H1 (cell line): ENCODE measurements at regions of chr20 and their contacts with region 1.

Region 1: GRCh38 chr20:45890985-45891983 is at the starts of genes CTSA and NEURL2:
- DNase-seq: peak; percentile 79 to 96
- H3K4me3 ChIP-seq: peak within 1 kb of the TSS; percentile 55 to 79 (median 74)
- H3K27ac ChIP-seq: peak within 1 kb of the TSS; percentile 38
- H3K4me1 ChIP-seq: peaks cover 0 to 10% (median 6%) of the 10 kb centered on the region in 4 experiments; a peak in 6 of 7 replicates
- H3K27me3 ChIP-seq: no peaks in the 10 kb centered on the region
- CTCF ChIP-seq: no peak
- EP300 ChIP-seq: peak in 1 of 2 experiments; percentile 91; a peak in 2 of 3 replicates
- POLR2A ChIP-seq: peak; percentile 43 to 69
- RAD21 ChIP-seq: peak in 1 of 2 experiments; percentile 1; a peak in 1 of 4 replicates
- total RNA-seq, gene CTSA: 49.7 and 52.5 TPM in 2 replicates
- total RNA-seq, gene NEURL2: 5.2 and 6.9 TPM in 2 replicates

Region 2: DNA sequence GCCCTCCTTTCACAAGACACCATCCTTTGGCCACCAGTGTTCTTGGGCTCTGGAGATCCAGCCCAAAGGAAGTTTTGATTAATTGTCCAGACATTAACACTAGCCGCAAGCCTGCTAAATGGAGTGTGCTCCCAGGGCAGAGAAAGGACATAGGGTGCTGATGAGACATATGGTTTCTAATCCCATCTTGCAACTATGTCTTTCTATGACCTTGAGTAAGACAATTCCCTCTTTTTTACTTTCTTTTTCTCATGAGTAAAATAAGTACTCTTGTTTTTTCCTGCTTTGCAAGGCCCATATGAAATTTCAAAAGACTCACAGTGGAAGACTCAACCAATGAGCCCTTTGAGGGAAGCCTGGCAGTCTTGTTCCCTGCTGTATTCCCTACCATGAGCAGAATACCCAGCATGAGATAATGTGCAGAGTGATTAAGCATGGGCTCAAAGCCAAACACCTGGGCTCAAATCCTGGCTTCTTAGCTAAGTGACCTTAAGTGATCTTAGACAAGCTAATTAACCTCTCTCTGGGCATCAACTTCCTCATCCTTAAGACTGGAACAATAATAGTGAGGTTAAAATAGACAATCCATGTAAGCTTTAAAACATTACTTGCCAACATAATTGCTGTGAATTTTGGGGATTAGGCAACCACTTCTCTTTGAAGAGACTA is 186.2 kb before region 1 on chr20 and contains the start of gene WFDC10B:
- CTCF ChIA-PET with region 1: no interaction called
- POLR2A ChIA-PET with region 1: no interaction called
- DNase-seq: no peak
- H3K4me3 ChIP-seq: no peak within 1 kb of the TSS
- H3K27ac ChIP-seq: no peak within 1 kb of the TSS
- H3K4me1 ChIP-seq: no peaks in the 10 kb centered on the region
- H3K27me3 ChIP-seq: no peaks in the 10 kb centered on the region; a peak in 1 of 7 replicates
- CTCF ChIP-seq: no peak
- EP300 ChIP-seq: no peak
- POLR2A ChIP-seq: no peak
- RAD21 ChIP-seq: no peak
- total RNA-seq, gene WFDC10B: 0.54 TPM in 1 of 2 replicates, not detected in the other

Region 3: DNA sequence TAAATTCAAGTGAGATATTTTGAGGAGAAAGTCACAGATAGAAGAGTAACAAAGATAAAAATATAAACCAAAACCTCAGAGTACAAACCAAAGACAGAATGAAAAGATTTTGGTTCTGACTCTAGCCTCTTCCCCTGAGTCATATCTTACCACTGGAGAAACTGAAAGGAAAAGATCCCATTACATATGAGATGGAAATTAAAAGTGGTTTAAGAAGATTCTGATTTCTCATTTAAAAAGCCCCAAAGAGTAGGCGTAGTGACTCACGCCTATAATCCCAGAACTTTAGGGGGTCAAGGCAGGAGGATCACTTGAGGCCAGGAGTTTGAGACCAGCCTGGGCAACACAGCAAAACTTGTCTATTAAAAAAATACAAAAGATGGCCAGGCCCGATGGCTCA is 138.5 kb before region 1 on chr20:
- CTCF ChIA-PET with region 1: no interaction called
- POLR2A ChIA-PET with region 1: no interaction called
- DNase-seq: no peak
- H3K4me3 ChIP-seq: no peak overlapping the region
- H3K27ac ChIP-seq: no peak overlapping the region
- H3K4me1 ChIP-seq: no peaks in the 10 kb centered on the region
- H3K27me3 ChIP-seq: no peaks in the 10 kb centered on the region
- CTCF ChIP-seq: no peak
- EP300 ChIP-seq: no peak
- POLR2A ChIP-seq: no peak
- RAD21 ChIP-seq: no peak

Region 4: GRCh38 chr20:45798935-45799642 is 92.2 kb before region 1 on chr20:
- CTCF ChIA-PET with region 1: interaction called, 21 read pairs
- POLR2A ChIA-PET with region 1: interaction called, 4 read pairs
- DNase-seq: peak; percentile 36 to 81
- H3K4me3 ChIP-seq: no peak overlapping the region
- H3K27ac ChIP-seq: no peak overlapping the region
- H3K4me1 ChIP-seq: no peaks in the 10 kb centered on the region; a peak in 1 of 7 replicates
- H3K27me3 ChIP-seq: no peaks in the 10 kb centered on the region
- CTCF ChIP-seq: peak; percentile 67 to 90 (median 82)
- EP300 ChIP-seq: no peak
- POLR2A ChIP-seq: no peak
- RAD21 ChIP-seq: peak; percentile 68 to 83

Region 5: GRCh38 chr20:45857114-45857881 is 34.0 kb before region 1 on chr20 and contains the starts of genes ACOT8 and ZSWIM3:
- CTCF ChIA-PET with region 1: interaction called, 6 read pairs
- POLR2A ChIA-PET with region 1: interaction called, 15 read pairs
- DNase-seq: peak; percentile 90 to 96
- H3K4me3 ChIP-seq: peak within 1 kb of the TSS; percentile 69 to 94 (median 77)
- H3K27ac ChIP-seq: peak within 1 kb of the TSS; percentile 49; the same call in 1 of the 2 replicates
- H3K4me1 ChIP-seq: peaks cover 10 to 16% (median 13%) of the 10 kb centered on the region in 4 experiments
- H3K27me3 ChIP-seq: no peaks in the 10 kb centered on the region
- CTCF ChIP-seq: no peak
- EP300 ChIP-seq: no peak
- POLR2A ChIP-seq: peak in 1 of 2 experiments; percentile 47; a peak in 1 of 3 replicates
- RAD21 ChIP-seq: no peak
- total RNA-seq, gene ACOT8: 37.3 and 37.6 TPM in 2 replicates
- total RNA-seq, gene ZSWIM3: 6.8 and 6.9 TPM in 2 replicates

Region 6: DNA sequence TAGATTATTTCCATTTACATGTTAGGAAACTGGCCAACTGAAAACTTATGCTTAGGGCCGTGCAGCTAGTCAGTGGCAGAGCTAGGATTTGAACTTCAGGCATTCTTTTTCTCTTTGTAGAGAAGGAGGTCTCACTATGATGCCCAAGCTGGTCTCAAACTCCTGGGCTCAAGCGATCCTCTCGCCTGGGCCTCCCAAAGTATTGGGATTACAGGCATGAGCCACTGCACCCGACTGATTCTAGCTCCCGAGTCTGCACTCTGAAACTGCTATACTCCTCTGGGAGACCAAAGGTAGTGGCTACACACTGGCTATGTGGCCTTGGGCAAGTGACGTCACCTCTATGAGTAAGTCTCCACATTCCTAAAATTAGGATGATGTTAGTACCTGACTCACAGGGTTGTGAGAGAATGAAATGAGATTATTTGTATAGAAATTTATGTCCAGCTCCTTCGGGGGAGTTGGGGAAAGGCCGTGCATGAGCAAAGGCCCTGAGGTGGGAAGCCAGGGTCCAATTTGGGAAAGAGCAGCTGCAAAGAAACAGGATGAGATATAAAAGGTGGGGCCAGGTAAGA is 14.3 kb after region 1 on chr20:
- CTCF ChIA-PET with region 1: interaction called, 24 read pairs
- POLR2A ChIA-PET with region 1: interaction called, 172 read pairs
- DNase-seq: no peak
- H3K4me3 ChIP-seq: no peak overlapping the region
- H3K27ac ChIP-seq: no peak overlapping the region
- H3K4me1 ChIP-seq: no peaks in the 10 kb centered on the region; a peak in 1 of 7 replicates
- H3K27me3 ChIP-seq: no peaks in the 10 kb centered on the region
- CTCF ChIP-seq: no peak
- EP300 ChIP-seq: no peak
- POLR2A ChIP-seq: no peak
- RAD21 ChIP-seq: no peak

Region 7: DNA sequence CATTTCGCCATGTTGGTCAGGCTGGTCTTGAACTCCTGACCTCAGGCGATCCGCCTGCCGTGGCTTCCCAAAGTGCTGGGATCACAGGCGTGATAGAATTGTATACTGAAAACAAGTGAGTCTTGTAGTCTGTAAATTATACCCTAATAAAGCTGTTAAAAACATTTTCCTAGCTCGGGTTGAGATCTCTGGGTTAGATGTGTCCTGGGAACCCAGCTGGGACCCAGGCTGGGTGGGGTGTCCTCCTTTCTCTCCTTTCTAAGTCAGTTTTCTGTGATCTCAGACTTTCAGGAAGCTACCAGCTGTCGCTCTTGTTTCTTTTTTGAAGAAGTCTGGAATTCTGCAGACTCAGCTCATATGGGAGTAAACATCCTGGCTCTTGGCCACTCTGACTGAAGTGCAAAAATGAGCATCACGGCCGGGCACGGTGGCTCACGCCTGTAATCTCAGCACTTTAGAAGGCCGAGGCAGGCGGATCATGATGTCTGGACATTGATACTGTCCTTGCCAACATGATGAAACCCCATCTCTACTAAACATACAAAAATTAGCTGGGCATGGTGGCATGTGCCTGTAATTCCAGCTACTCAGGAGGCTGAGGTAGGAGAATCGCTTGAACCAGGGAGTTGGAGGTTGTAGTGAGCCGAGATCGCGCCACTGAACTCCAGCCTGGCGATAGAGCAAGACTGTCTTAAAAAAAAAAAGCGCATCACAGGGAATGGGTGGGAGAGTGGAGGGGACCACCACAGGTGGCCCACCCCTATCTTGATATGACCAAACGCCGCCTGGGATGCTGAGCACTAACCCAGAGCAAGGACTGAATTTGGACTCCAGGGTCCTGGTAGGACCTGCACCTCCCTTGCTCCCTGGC is 33.3 kb after region 1 on chr20:
- CTCF ChIA-PET with region 1: interaction called, 5 read pairs
- POLR2A ChIA-PET with region 1: interaction called, 16 read pairs
- DNase-seq: no peak
- H3K4me3 ChIP-seq: no peak overlapping the region
- H3K27ac ChIP-seq: no peak overlapping the region
- H3K4me1 ChIP-seq: peaks cover 3 to 7% (median 5%) of the 10 kb centered on the region in 4 experiments; a peak in 5 of 7 replicates
- H3K27me3 ChIP-seq: no peaks in the 10 kb centered on the region
- CTCF ChIP-seq: no peak
- EP300 ChIP-seq: no peak
- POLR2A ChIP-seq: no peak
- RAD21 ChIP-seq: no peak

Region 8: DNA sequence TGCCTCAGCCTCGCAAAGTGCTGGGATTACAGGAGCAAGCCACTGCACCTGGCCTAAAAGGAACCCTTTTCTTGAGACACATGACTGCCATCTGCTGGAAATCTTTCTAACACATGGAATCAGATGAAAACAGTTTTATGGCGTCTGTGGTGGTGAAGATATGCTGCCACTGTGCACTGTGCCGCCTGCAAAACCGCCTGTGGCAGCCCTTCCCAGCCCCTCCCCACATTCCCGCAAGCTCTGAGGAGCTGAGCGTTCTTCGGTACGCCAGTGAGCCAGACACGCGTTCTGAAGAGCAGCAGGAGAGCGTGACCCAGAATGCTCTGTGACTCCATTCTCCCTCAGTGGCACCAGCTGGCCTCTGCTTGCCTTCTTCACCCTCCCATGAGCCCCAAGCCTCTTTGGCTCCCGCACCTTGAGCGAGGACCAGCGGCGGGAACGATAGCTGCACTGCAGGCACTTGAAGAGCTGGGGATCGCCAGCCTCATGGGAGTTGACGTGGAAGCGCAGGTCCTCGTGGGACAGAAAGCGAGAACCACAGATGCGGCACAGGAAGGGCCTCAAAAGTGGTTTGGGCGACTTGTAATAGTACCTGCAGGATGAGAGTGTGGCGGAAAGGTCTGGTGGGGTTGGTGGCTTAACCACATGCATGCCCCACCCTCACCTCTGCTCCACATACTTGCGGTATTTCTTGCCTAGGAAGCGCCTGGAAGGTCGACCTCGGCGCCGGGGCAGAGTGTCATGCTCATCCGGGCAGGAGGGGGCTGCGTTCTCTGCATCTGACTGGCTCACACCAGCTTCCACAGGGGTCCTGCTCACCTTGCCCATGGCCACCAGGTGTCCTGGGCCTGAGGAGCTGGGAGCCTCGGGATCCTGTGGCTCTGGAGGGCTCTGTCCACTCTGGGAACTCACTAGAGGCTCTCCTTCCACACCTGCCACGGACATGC is 72.0 kb after region 1 on chr20:
- CTCF ChIA-PET with region 1: interaction called, 15 read pairs
- POLR2A ChIA-PET with region 1: interaction called, 4 read pairs
- DNase-seq: no peak
- H3K4me3 ChIP-seq: no peak overlapping the region
- H3K27ac ChIP-seq: no peak overlapping the region
- H3K4me1 ChIP-seq: no peaks in the 10 kb centered on the region
- H3K27me3 ChIP-seq: no peaks in the 10 kb centered on the region
- CTCF ChIP-seq: peak in 2 of 3 experiments; percentile 37 to 47; a peak in 2 of 4 replicates
- EP300 ChIP-seq: no peak
- POLR2A ChIP-seq: no peak
- RAD21 ChIP-seq: peak; percentile 56 to 66